H1 (cell line): ENCODE measurements at regions of chr14 and their contacts with region 1.

Region 1: DNA sequence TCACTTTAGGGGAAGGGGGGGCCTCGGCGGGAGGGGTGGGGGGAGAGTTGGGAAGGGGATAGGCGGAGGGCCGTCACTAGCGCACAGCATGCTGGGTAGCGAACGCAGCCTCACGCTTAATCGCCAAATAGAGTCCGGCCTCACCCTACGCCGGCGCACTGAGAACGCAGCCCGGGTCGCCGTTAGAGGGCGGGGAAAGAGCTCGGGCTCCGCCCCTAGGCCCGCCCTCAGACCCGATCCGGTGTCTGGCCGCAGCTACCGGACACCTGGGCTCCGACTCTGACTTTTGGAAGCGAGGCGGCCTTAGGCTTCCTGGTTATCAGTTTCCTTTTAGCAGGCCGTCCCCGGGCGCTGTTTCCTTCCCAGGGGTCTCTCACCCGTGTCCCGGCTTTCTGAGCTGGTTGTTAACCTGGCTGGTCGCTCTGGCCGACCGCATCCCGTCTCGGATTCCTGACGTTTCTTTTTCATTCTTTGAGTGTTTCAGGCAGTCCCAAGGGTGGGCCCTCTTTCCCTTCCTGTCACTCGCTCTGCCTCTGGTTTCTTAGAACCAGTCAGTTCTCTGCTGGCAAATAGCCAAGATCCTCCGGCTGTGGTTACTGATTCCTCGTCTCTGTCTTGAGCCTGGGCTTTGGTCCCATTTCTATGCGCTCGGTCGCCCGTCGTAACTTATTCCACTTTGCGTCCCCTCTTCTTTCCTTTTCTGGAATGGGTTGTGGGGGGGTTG is 378 bp upstream of the STRN3 start:
- DNase-seq: peak; percentile 89 to 96
- H3K4me3 ChIP-seq: peak overlapping the region; percentile 81 to 100 (median 90)
- H3K27ac ChIP-seq: no peak overlapping the region; the same call in 1 of the 2 replicates
- H3K4me1 ChIP-seq: peaks cover 0 to 2% (median 0%) of the 10 kb centered on the region in 4 experiments; a peak in 2 of 7 replicates
- H3K27me3 ChIP-seq: no peaks in the 10 kb centered on the region
- CTCF ChIP-seq: 0 out of 4 replicates have a peak, but pooled peaks of 1 of the 3 experiments have one; percentile 5
- EP300 ChIP-seq: no peak
- POLR2A ChIP-seq: peak in 1 of 2 experiments; percentile 91; a peak in 2 of 3 replicates
- RAD21 ChIP-seq: no peak

Region 2: GRCh38 chr14:30957813-30958370 is 68.7 kb before region 1 on chr14:
- CTCF ChIA-PET with region 1: no interaction called
- POLR2A ChIA-PET with region 1: no interaction called
- DNase-seq: no peak
- H3K4me3 ChIP-seq: no peak overlapping the region
- H3K27ac ChIP-seq: no peak overlapping the region
- H3K4me1 ChIP-seq: 0 out of 7 replicates have a peak, but pooled peaks cover 0 to 3% (median 0%) of the 10 kb centered on the region in 4 experiments
- H3K27me3 ChIP-seq: no peaks in the 10 kb centered on the region
- CTCF ChIP-seq: no peak
- EP300 ChIP-seq: no peak
- POLR2A ChIP-seq: no peak
- RAD21 ChIP-seq: no peak

Region 3: DNA sequence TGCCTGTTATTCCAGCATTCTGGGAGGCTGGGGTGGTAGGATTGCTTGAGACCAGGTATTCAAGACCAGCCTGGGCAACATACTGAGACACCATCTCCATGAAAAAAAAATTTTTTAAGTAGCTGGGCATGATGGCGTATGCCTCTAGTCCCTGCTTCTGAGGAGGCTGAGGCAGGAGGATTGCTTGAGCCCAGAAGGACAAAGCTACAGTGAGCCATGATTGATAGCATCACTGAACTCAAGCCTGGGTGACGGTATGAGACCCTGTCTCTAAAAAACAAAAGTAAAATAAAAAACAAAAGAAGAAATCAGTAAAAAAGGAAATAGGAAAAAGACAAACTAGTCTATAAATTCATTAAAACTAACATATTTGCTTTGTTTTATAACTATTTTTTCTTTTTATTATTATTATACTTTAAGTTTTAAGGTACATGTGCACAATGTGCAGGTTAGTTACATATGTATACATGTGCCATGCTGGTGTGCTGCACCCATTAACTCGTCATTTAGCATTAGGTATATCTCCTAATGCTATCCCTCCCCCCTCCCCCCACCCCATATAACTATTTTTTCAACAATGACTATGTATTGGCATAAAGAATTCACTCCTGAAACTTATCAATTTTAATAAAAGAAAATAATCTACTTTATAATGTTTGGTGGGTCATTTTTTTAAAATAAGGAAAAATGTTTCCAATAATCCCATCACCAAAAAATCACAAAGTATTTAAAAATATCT is 16.6 kb before region 1 on chr14:
- CTCF ChIA-PET with region 1: interaction called, 3 read pairs
- POLR2A ChIA-PET with region 1: interaction called, 38 read pairs
- DNase-seq: no peak
- H3K4me3 ChIP-seq: no peak overlapping the region
- H3K27ac ChIP-seq: no peak overlapping the region
- H3K4me1 ChIP-seq: peaks cover 0 to 5% (median 0%) of the 10 kb centered on the region in 4 experiments; a peak in 2 of 7 replicates
- H3K27me3 ChIP-seq: no peaks in the 10 kb centered on the region
- CTCF ChIP-seq: no peak
- EP300 ChIP-seq: no peak
- POLR2A ChIP-seq: no peak
- RAD21 ChIP-seq: no peak

Region 4: GRCh38 chr14:31038521-31039166 is 12.1 kb after region 1 on chr14:
- CTCF ChIA-PET with region 1: interaction called, 6 read pairs
- POLR2A ChIA-PET with region 1: interaction called, 18 read pairs
- DNase-seq: no peak
- H3K4me3 ChIP-seq: no peak overlapping the region
- H3K27ac ChIP-seq: no peak overlapping the region
- H3K4me1 ChIP-seq: peaks cover 0 to 3% (median 0%) of the 10 kb centered on the region in 4 experiments; a peak in 3 of 7 replicates
- H3K27me3 ChIP-seq: no peaks in the 10 kb centered on the region
- CTCF ChIP-seq: no peak
- EP300 ChIP-seq: no peak
- POLR2A ChIP-seq: no peak
- RAD21 ChIP-seq: no peak

Region 5: GRCh38 chr14:31059152-31059924 is 32.8 kb after region 1 on chr14:
- CTCF ChIA-PET with region 1: interaction called, 3 read pairs
- POLR2A ChIA-PET with region 1: interaction called, 19 read pairs
- DNase-seq: no peak
- H3K4me3 ChIP-seq: no peak overlapping the region
- H3K27ac ChIP-seq: no peak overlapping the region
- H3K4me1 ChIP-seq: peaks cover 4 to 8% (median 5%) of the 10 kb centered on the region in 4 experiments; a peak in 5 of 7 replicates
- H3K27me3 ChIP-seq: no peaks in the 10 kb centered on the region
- CTCF ChIP-seq: no peak
- EP300 ChIP-seq: no peak
- POLR2A ChIP-seq: no peak
- RAD21 ChIP-seq: no peak

Region 6: GRCh38 chr14:31340297-31341063 is 313.9 kb after region 1 on chr14:
- CTCF ChIA-PET with region 1: no interaction called
- POLR2A ChIA-PET with region 1: no interaction called
- DNase-seq: no peak
- H3K4me3 ChIP-seq: no peak overlapping the region
- H3K27ac ChIP-seq: no peak overlapping the region
- H3K4me1 ChIP-seq: no peaks in the 10 kb centered on the region
- H3K27me3 ChIP-seq: no peaks in the 10 kb centered on the region
- CTCF ChIP-seq: no peak
- EP300 ChIP-seq: no peak
- POLR2A ChIP-seq: no peak
- RAD21 ChIP-seq: no peak